AG04450 (cell line): ENCODE measurements at regions of chr4 and their contacts with region 1.

Region 1: GRCh38 chr4:55395529-55396307 is at the start of gene TMEM165:
- DNase-seq: peak; percentile 46
- H3K4me3 ChIP-seq: peak within 1 kb of the TSS; percentile 79
- H3K27ac ChIP-seq: peak within 1 kb of the TSS; percentile 93
- H3K27me3 ChIP-seq: no peaks in the 10 kb centered on the region
- CTCF ChIP-seq: no peak
- polyA plus RNA-seq, gene TMEM165: 134 and 146 TPM in 2 replicates

Region 2: DNA sequence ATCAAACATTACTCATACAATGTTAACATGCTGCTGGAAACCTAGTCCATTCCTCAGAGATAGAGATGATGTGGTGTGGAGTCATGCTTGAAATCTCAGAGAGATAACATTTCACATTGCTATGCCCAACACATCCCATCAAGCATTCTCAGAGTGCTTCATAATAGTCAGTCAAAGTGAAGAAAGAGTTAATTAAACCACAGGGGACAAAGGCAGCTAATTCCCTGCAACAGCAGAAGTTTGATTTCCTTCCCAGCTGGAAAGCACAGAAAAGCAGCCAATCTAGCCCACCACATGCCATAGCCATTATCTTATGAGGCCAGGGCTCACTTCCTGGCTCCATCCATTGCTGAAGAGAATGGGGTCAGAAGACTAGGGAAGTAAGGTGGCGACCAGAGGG is 279.3 kb before region 1 on chr4:
- CTCF ChIA-PET with region 1: no interaction called
- POLR2A ChIA-PET with region 1: no interaction called
- DNase-seq: no peak
- H3K4me3 ChIP-seq: no peak overlapping the region
- H3K27ac ChIP-seq: no peak overlapping the region
- H3K27me3 ChIP-seq: peaks cover 2% of the 10 kb centered on the region
- CTCF ChIP-seq: no peak

Region 3: GRCh38 chr4:55546756-55547465 is 151.2 kb after region 1 on chr4 and contains the start of gene CLOCK:
- CTCF ChIA-PET with region 1: interaction called, 5 read pairs
- POLR2A ChIA-PET with region 1: interaction called, 11 read pairs
- DNase-seq: peak; percentile 76
- H3K4me3 ChIP-seq: peak within 1 kb of the TSS; percentile 82
- H3K27ac ChIP-seq: peak within 1 kb of the TSS; percentile 83
- H3K27me3 ChIP-seq: no peaks in the 10 kb centered on the region
- CTCF ChIP-seq: peak; percentile 47
- polyA plus RNA-seq, gene CLOCK: 15.1 and 18.8 TPM in 2 replicates